Activated CD4-positive, alpha-beta memory T cell treated with anti-CD3 and anti-CD28 coated beads, Interleukin-2, amount 10 ng/mL, durations not matched to agents 7 days and 5 days (primary cell): ENCODE measurements at regions of chr12 and their contacts with region 1.

Region 1: DNA sequence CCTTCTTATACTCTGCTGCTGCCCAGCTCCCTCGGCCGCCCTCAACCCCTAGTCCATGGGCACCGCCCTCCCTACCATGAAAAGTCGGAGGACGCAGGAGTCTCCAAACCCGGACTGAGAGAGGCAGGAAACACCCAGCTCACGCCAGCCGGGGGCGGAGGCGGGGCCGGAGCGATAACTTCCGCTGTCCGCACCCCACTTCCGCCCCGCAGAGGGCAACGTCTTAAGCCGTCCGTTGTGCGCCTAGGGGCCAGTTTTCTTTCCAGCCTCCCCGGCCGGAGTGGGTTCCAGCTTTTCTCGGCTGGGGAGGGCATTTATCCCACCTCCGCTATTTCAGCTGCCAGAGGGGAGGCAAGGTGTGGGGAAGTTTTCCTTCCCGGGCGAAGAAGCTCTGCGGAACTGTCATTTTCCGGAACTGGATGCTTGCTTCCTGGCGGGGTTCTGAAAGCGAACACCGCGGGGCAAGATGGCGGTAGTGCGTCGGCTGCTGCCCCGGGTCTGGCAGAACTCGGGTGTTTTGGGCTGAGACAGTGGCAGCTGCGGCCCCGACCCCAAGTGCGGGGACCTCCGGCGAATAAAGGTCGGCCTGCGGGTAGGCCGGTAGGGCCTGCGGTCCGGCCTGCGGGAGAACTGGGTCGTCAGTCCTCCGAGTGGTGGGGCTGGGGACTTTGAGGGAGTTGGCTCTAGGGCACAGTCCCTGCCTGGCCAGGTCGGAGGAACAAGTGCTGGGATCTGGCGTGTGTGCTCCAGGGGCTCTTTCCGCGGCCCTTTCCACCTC is at the starts of genes KCTD10 and UBE3B:
- DNase-seq: peak; percentile 89
- H3K4me3 Mint-ChIP-seq: peak within 1 kb of the TSS; percentile 99
- H3K27ac Mint-ChIP-seq: peak within 1 kb of the TSS; percentile 96
- H3K4me1 Mint-ChIP-seq: peaks cover 42% of the 10 kb centered on the region
- H3K27me3 Mint-ChIP-seq: no peaks in the 10 kb centered on the region
- total RNA-seq, gene KCTD10: 44.1 to 45.2 TPM
- total RNA-seq, gene UBE3B: 35.2 to 37.5 TPM

Region 2: GRCh38 chr12:109428037-109428629 is 49.2 kb before region 1 on chr12:
- CTCF ChIA-PET with region 1: interaction called, 13 read pairs
- POLR2A ChIA-PET with region 1: interaction called, 5 read pairs
- DNase-seq: peak; percentile 77
- H3K4me3 Mint-ChIP-seq: no peak overlapping the region
- H3K27ac Mint-ChIP-seq: no peak overlapping the region
- H3K4me1 Mint-ChIP-seq: peaks cover 6% of the 10 kb centered on the region
- H3K27me3 Mint-ChIP-seq: peaks cover 2% of the 10 kb centered on the region

Region 3: GRCh38 chr12:109449845-109450532 is 27.4 kb before region 1 on chr12:
- CTCF ChIA-PET with region 1: no interaction called
- POLR2A ChIA-PET with region 1: interaction called, 12 read pairs
- DNase-seq: no peak
- H3K4me3 Mint-ChIP-seq: no peak overlapping the region
- H3K27ac Mint-ChIP-seq: no peak overlapping the region
- H3K4me1 Mint-ChIP-seq: peaks cover 19% of the 10 kb centered on the region
- H3K27me3 Mint-ChIP-seq: no peaks in the 10 kb centered on the region

Region 4: GRCh38 chr12:109500406-109501185 is 23.2 kb after region 1 on chr12:
- CTCF ChIA-PET with region 1: no interaction called
- POLR2A ChIA-PET with region 1: no interaction called
- DNase-seq: no peak
- H3K4me3 Mint-ChIP-seq: no peak overlapping the region
- H3K27ac Mint-ChIP-seq: no peak overlapping the region
- H3K4me1 Mint-ChIP-seq: no peaks in the 10 kb centered on the region
- H3K27me3 Mint-ChIP-seq: no peaks in the 10 kb centered on the region